ENCODE measurements at regions of chr2 and their contacts with region 1.

Region 1: DNA sequence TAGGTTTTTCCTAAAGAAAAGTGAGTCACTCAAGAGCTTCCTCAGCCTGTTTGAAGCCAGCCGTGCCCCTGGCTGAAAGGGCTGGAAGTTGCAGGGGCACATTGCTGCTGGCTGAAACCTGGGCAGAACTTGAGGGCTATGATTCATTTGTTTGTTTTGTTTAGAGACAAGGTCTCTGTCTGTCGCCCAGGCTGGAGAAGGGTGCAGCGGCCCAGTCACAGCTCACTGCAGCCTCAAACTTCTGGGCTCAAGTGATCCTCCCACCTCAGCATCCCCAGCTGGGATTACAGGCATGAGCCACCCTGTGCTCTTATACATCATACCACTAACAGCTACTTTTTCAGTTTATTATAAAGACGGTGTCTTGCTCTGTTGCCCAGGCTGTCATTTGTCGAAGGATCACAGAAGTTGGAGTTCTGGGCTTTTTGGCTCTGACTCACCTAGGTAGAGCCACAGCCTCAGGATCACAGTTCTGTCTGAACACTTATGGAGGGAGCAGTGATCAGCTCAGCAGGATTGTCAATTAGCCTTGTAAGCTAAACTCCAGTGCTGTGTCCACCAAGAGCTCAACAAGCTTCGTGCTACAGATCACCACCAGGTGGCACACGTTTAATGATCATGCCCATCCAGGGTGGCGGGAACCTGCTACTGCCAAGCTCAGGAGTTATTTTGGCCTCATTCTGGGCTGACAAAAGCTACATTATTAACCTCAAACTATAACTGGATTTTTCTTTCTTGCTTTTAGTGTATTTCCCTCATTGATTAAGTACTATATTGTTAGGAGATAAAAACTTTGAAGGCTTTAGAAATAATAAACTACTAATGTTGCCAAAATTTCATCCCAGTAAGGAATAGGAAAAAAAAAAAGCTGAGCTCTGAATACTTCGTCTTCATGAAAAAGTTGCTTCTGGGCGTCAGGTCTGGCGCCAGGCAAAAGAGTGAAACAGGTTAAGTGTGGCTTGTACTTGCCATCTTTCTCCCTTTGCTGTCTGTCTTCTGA is 57.9 kb downstream of the ARHGEF33 start:
- DNase-seq: peak; percentile 48
- H3K4me3 ChIP-seq: no peak overlapping the region
- H3K27ac ChIP-seq: no peak overlapping the region
- H3K27me3 ChIP-seq: peaks cover 10% of the 10 kb centered on the region
- CTCF ChIP-seq: peak; percentile 72

Region 2: DNA sequence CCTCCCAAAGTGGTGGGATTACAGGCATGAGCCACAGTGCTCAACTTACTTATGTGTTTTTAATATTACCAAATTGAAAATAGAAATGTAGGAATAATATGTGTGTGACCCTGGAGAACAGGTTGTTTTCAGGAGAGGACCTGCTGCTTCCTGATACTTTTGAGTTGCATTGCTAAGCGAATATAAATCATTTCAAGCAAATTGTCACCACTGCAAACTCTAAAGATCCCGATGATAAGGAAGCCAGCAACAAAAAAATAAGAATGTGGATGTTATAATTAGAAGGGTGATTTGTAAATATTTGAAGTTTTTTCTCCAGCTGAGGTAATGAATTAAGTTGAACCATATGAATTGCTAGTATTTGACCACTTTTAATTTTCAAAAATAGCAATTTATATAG is 16.9 kb before region 1 on chr2:
- CTCF ChIA-PET with region 1: interaction called, 30 read pairs
- POLR2A ChIA-PET with region 1: no interaction called
- DNase-seq: no peak
- H3K4me3 ChIP-seq: no peak overlapping the region
- H3K27ac ChIP-seq: no peak overlapping the region
- H3K27me3 ChIP-seq: no peaks in the 10 kb centered on the region
- CTCF ChIP-seq: no peak

Region 3: GRCh38 chr2:38935568-38936172 is 11.9 kb before region 1 on chr2:
- CTCF ChIA-PET with region 1: interaction called, 30 read pairs
- POLR2A ChIA-PET with region 1: no interaction called
- DNase-seq: no peak
- H3K4me3 ChIP-seq: peak overlapping the region; percentile 11; the same call in 1 of the 2 replicates
- H3K27ac ChIP-seq: no peak overlapping the region
- H3K27me3 ChIP-seq: no peaks in the 10 kb centered on the region
- CTCF ChIP-seq: no peak

Region 4: DNA sequence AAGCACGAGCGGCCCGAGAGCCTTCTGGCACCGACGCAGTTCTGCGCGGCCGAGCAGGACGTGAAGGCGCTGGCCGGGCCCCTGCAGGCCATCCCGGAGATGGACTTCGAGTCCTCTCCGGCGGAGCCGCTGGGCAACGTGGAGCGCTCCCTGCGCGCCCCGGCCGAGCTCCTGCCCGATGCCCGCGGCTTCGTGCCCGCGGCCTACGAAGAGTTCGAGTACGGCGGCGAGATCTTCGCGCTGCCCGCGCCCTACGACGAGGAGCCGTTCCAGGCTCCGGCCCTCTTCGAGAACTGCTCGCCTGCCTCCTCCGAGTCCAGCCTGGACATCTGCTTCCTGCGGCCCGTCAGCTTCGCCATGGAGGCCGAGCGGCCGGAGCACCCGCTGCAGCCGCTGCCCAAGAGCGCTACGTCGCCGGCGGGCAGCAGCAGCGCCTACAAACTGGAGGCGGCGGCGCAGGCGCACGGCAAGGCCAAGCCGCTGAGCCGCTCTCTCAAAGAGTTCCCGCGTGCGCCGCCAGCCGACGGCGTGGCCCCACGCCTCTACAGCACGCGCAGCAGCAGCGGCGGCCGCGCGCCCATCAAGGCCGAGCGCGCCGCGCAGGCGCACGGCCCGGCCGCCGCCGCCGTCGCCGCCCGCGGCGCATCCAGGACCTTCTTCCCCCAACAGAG is 12.5 kb after region 1 on chr2:
- CTCF ChIA-PET with region 1: interaction called, 22 read pairs
- POLR2A ChIA-PET with region 1: interaction called, 3 read pairs
- DNase-seq: peak; percentile 67
- H3K4me3 ChIP-seq: peak overlapping the region; percentile 57
- H3K27ac ChIP-seq: no peak overlapping the region
- H3K27me3 ChIP-seq: peaks cover 8% of the 10 kb centered on the region
- CTCF ChIP-seq: peak; percentile 11; the same call in 1 of the 2 replicates

Region 5: GRCh38 chr2:38988716-38989115 is 41.2 kb after region 1 on chr2:
- CTCF ChIA-PET with region 1: interaction called, 13 read pairs
- POLR2A ChIA-PET with region 1: no interaction called
- DNase-seq: no peak
- H3K4me3 ChIP-seq: no peak overlapping the region
- H3K27ac ChIP-seq: no peak overlapping the region
- H3K27me3 ChIP-seq: no peaks in the 10 kb centered on the region
- CTCF ChIP-seq: no peak

Region 6: DNA sequence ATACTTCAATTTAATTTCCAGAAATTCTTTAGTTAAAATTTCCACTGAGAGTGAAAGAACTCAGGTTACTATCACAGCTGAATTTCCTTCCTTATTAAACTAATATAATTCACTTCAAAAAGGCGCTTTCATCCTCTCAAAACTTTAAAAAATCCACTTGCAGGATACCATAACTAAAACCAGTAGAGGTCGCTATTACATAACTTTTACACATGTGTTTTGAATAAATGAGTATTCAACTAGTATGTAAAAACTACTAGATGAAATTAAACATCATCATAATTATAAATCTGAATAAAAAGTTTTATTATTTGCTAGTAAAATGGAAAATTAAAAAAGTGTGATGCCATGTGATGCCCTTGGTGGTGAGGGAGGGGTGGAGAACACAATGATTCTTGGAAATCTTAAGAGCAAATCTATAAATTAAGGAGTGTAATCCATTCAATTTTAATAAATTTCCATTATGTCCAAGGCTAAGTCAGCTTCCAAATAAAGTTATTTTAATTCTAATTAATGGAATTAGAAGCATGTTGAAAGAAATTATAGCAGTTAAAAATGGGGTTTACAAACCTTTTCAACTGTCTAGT is 111.9 kb after region 1 on chr2:
- CTCF ChIA-PET with region 1: interaction called, 10 read pairs
- POLR2A ChIA-PET with region 1: no interaction called
- DNase-seq: peak; percentile 18
- H3K4me3 ChIP-seq: no peak overlapping the region
- H3K27ac ChIP-seq: no peak overlapping the region
- H3K27me3 ChIP-seq: no peaks in the 10 kb centered on the region
- CTCF ChIP-seq: peak; percentile 61

Region 7: DNA sequence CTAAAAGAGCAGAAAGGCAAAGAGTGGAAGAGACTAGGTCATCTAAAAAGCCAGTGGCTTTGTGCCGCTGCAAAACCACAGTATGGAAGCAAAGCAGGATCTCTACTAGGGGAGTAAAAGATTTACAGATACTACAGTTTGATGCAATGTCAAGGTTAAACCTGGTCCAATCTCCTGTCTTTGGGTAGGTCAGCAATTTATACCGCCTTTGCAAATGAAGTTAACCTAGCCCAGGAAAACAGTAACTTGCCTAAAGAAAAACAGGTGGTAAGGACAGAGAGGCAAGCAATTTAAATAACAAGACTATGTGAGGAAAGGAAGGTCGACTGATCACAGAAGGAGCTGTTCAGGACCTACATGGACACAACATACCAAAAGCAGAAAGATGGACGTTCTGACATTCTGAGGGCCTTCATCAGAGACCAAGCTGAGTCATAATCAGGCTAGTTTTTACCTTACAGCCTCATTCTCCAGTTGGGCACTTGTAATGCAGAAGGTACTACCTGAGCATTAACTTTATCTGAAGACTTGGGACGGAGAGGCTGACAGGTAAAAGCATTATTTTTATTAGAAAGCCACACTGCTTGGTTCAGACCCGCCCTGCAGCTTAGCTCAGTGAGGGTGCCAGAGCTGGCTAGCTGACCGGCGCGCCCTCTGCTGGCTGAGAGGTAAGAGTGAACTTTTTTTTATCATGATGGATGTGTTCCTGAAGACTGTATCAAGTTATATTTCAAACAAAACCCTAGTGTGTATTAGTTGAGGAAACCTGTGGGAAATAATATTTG is 280.3 kb after region 1 on chr2:
- CTCF ChIA-PET with region 1: interaction called, 140 read pairs
- POLR2A ChIA-PET with region 1: no interaction called
- DNase-seq: peak; percentile 29
- H3K4me3 ChIP-seq: no peak overlapping the region
- H3K27ac ChIP-seq: no peak overlapping the region
- H3K27me3 ChIP-seq: no peaks in the 10 kb centered on the region
- CTCF ChIP-seq: peak; percentile 93

Measured in AG04450 (cell line).